Ascending aorta (tissue), 2 donors: ENCODE measurements at regions of chr18 and their contacts with region 1.

Region 1: DNA sequence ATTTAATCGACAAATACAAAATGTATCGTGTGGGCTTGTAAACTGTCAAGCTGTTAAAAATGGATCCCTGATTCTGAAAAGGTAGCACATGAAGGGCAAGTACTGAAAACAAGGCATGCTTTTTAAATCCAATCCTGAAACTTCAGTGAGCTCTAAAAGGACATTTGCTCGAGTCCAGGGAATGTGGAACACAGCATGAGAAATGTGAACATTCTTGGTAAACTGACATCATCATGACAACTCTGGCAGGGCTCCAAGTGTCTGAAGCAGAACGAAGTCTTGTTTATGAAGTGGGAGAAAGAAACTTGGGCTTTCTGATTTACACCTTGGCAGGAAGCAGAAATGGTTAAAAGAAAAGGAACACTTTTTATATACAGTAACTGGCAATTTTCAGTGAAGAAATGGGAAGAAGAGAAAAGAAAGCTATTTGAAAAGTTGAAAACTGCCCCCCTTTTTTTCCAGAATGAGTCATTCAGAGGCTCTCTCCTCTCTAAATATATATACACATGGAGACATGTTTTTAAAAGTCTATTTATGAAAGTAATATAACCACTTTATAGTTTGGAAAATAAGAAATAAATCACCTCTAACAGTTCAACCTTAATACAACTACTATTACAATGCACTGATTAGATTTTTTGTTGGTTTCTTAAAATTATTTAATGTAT is 120.8 kb downstream of the GAREM1 start:
- DNase-seq: peak; percentile 17 to 91
- H3K4me3 ChIP-seq: peak overlapping the region in 1 of 2 donors; percentile 1
- H3K27ac ChIP-seq: peak overlapping the region; percentile 78 to 85
- H3K4me1 ChIP-seq: peaks cover 0 to 47% of the 10 kb centered on the region in 2 donors
- H3K27me3 ChIP-seq: no peaks in the 10 kb centered on the region
- CTCF ChIP-seq: no peak

Region 2: DNA sequence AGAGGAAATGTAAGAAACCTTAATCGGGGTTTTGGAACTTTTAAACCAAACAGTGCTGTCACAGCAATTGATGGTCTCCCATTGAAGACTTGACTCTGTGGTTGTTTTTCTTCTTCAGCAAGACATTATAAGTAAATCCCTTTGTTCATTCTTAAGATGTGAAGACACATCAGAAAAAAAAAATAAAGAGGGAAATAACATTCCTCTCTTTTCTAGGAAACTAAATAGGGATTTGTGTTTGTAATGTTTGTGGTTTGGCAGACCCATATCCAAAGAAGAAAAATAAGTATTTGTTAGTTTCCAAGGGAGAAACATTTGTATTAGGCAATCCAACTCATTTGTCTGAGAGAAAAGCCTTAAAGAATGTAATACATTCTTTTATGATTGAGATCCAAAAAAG is 1667.2 kb before region 1 on chr18:
- intact Hi-C with region 1: no loop called
- DNase-seq: no peak
- H3K4me3 ChIP-seq: no peak overlapping the region
- H3K27ac ChIP-seq: no peak overlapping the region
- H3K4me1 ChIP-seq: no peaks in the 10 kb centered on the region
- H3K27me3 ChIP-seq: no peaks in the 10 kb centered on the region
- CTCF ChIP-seq: no peak

Region 3: DNA sequence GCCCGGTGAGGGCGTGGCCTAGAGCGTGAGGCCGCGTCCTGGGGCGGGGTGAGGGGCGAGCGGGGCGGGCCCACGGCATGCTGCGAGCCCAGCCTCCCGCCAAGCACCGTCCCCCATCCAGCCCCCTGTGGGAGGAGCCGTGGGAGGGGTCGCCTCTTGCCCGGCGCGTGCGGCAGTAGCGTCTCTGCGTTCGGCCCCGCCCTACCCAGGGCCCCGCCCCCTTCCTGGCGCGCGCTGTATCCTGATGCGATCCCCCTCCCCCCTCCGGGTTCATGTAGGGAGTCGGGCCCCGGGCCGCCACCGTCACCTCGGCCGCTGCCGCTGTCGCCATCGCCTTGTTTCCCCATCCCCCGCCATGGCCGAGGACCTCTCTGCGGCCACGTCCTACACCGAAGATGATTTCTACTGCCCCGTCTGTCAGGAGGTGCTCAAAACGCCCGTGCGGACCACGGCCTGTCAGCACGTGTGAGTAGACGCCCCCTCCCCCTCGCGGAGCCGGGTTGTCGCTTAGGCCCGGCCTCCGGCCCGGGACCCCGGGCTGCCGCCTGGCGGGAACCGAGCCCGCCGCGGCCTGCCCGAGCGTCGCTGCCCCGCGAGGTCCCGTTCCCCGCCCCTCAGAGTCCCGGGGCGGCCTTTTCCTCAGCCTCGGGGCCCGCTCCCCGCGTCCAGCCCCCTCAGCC is 257.3 kb before region 1 on chr18:
- intact Hi-C with region 1: loop called (anchors 10 kb)
- DNase-seq: peak; percentile 92 to 99
- H3K4me3 ChIP-seq: peak overlapping the region; percentile 89 to 96
- H3K27ac ChIP-seq: peak overlapping the region; percentile 99 to 100
- H3K4me1 ChIP-seq: peaks cover 0 to 12% of the 10 kb centered on the region in 2 donors
- H3K27me3 ChIP-seq: no peaks in the 10 kb centered on the region
- CTCF ChIP-seq: no peak

Region 4: GRCh38 chr18:32301976-32302743 is 47.7 kb before region 1 on chr18:
- intact Hi-C with region 1: loop called (anchors 5 kb)
- DNase-seq: peak in 1 of 2 donors; percentile 72
- H3K4me3 ChIP-seq: no peak overlapping the region
- H3K27ac ChIP-seq: peak overlapping the region; percentile 82 to 91
- H3K4me1 ChIP-seq: peaks cover 4 to 21% of the 10 kb centered on the region in 2 donors
- H3K27me3 ChIP-seq: no peaks in the 10 kb centered on the region
- CTCF ChIP-seq: no peak

Region 5: DNA sequence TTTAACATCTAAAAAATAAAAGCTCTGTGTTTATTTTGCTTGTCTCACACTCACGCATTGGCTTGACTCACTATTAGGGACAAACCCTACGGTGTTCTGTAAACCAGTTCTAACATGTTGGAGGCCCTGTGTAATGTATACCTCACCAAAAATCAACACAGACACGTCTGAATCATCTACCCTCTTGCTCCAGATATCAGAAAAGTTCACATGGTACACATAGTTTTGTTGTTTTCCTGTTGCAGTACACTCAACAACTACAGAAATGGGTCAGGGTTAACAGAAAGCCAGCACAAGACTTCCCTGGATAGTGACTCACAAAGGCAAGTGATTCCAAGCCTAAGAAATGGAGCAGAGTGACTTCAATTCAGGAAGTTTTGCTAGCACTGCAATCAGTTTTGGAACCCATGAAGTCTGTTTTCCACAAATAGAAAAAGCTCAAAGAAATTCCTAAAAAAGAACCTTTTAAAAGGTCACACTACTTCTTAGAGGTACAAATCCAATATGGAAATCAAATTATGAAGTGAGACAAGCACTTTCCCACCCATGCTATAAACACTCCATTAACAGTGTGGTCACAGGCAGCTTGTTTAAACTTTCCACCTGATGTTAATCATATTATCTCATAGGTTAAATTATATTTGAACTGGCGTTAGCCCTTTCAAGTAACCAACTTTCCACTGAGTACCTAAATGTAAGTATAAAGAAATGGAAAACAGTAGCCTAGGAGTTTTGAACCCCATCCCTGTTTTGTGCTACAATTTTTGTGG is 33.4 kb after region 1 on chr18:
- intact Hi-C with region 1: loop called (anchors 2 kb)
- DNase-seq: no peak
- H3K4me3 ChIP-seq: peak overlapping the region in 1 of 2 donors; percentile 5
- H3K27ac ChIP-seq: peak overlapping the region; percentile 71 to 93
- H3K4me1 ChIP-seq: peaks cover 0 to 21% of the 10 kb centered on the region in 2 donors
- H3K27me3 ChIP-seq: no peaks in the 10 kb centered on the region
- CTCF ChIP-seq: no peak